Body of pancreas (tissue), 4 donors: ENCODE measurements at regions of chr16 and their contacts with region 1.

Region 1: DNA sequence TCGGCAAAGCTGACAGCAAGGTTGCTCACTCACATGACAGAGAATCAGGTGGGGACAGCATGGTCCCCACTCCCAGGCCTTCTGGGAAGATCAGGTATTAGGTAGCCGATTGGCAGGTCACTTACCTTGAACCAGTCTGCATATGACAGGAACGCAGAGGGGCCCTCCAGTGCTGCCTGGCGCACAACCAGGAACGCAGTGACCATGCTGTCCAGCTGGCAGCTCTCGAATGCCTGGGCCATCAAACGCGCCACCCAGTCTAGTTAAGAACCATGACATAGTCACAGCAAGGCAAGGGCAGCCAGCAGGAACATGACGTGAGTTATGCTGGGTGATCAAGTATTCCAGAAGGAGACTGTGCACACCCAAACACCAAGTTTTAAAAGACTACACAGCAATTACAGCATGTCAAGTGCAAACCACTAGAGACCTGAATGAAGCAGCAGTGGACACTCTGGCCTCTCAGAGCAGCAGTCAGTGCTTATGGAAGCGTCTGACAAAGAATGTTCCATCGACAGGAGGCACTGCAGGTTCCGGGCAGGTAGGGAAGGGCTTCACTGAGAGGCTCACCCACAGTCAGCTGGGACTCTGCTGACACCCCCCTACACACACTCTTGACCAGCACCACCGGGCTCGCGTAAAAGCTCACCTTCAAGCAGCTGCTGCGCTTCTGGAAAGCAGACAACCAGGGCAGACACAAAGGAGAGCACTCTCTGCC is 25.0 kb downstream of the FANCA start:
- DNase-seq: no peak
- ATAC-seq: no peak
- H3K4me3 ChIP-seq: no peak overlapping the region
- H3K27ac ChIP-seq: no peak overlapping the region
- H3K4me1 ChIP-seq: no peaks in the 10 kb centered on the region
- H3K27me3 ChIP-seq: no peaks in the 10 kb centered on the region
- CTCF ChIP-seq: no peak
- POLR2A ChIP-seq: no peak

Region 2: DNA sequence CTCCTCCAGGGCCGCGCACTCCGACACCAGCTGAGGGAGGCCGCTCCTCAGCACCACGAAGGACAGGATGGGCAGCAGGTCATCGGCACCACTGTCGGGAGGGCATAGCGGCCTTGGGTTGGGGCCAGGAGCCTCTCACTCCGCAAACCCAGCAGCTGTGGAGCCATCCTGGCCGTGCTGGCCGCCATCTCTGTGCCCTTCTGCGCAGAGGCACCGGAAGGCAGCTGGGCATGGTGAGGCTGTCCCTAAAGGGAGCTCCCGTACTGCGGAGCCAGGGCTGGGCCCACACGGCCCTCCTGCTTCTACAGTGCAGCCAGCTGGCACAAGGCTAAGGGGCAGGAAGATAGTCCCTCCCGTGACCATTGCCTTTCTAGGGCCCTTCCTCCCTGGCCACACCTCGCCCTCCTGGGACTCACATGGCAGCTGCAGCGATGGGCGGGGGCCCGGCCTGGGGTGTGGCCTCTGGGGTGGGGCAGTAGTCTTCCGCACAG is 83.0 kb before region 1 on chr16:
- intact Hi-C with region 1: loop called (anchors 5 kb)
- DNase-seq: no peak
- ATAC-seq: no peak
- H3K4me3 ChIP-seq: no peak overlapping the region
- H3K27ac ChIP-seq: no peak overlapping the region
- H3K4me1 ChIP-seq: peaks cover 21% of the 10 kb centered on the region
- H3K27me3 ChIP-seq: no peaks in the 10 kb centered on the region
- CTCF ChIP-seq: no peak
- POLR2A ChIP-seq: no peak